Adrenal gland (tissue), 19 donors: ENCODE measurements at regions of chr11 and their contacts with region 1.

Region 1: DNA sequence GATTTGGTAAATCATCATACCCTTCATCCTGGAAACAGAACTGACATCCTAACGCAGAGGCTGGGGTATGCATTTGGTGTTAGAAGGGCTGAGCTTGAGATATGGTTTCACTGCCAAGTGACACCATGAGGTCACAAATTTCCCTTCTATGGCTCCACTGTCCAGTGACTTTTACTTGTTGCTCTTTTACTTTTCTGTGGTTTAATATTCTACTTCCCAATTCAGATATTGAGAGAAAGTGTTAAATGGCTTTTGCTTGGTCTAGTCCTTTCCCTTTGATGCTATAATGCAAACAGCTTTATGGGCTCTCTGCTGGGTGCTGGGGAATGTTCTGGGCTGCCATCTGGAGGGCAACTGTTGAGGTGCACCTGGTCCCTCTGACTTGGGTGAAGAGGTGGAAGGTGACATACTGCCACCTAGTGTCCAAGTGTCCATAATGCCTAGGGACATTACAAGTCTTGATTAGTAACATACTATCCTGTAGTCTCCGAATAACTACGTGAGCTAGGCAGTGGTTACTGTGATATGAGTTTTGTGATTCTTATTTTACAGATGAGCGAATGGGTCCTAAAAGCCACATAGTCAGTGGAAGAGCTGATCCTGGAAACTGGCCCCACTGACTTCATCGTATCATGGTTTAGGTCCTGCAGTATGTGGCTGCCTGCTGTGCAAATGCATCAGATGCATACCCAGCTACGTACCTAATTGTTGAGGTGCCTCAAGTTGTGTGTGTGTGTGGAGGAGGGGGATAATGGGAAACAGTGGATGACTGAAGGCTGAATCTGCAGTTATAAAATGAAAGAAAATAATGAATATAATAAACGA is 149.1 kb upstream of the RAG2 start:
- DNase-seq: peak; percentile 86 to 96 (median 88)
- H3K4me3 ChIP-seq: no peak overlapping the region
- H3K27ac ChIP-seq: no peak overlapping the region
- H3K4me1 ChIP-seq: no peaks in the 10 kb centered on the region
- H3K27me3 ChIP-seq: no peaks in the 10 kb centered on the region
- CTCF ChIP-seq: peak; percentile 93 to 99 (median 98)
- POLR2A ChIP-seq: no peak

Region 2: GRCh38 chr11:36564376-36565030 is 182.6 kb before region 1 on chr11:
- intact Hi-C with region 1: loop called in 1 of 2 experiments (anchors 5 kb)
- DNase-seq: peak; percentile 40 to 81 (median 56)
- H3K4me3 ChIP-seq: peak overlapping the region in 2 of 4 donors; percentile 18 to 52
- H3K27ac ChIP-seq: no peak overlapping the region
- H3K4me1 ChIP-seq: peaks cover 0 to 5% of the 10 kb centered on the region in 2 donors
- H3K27me3 ChIP-seq: no peaks in the 10 kb centered on the region
- CTCF ChIP-seq: peak; percentile 47 to 80 (median 67)
- POLR2A ChIP-seq: no peak

Region 3: GRCh38 chr11:36702330-36703055 is 44.6 kb before region 1 on chr11:
- intact Hi-C with region 1: loop called (anchors 2 to 5 kb)
- DNase-seq: peak; percentile 19 to 64 (median 40)
- H3K4me3 ChIP-seq: no peak overlapping the region
- H3K27ac ChIP-seq: no peak overlapping the region
- H3K4me1 ChIP-seq: no peaks in the 10 kb centered on the region
- H3K27me3 ChIP-seq: no peaks in the 10 kb centered on the region
- CTCF ChIP-seq: peak; percentile 57 to 94 (median 88)
- POLR2A ChIP-seq: no peak